ENCODE measurements at regions of chr15 and their contacts with region 1.

Region 1: DNA sequence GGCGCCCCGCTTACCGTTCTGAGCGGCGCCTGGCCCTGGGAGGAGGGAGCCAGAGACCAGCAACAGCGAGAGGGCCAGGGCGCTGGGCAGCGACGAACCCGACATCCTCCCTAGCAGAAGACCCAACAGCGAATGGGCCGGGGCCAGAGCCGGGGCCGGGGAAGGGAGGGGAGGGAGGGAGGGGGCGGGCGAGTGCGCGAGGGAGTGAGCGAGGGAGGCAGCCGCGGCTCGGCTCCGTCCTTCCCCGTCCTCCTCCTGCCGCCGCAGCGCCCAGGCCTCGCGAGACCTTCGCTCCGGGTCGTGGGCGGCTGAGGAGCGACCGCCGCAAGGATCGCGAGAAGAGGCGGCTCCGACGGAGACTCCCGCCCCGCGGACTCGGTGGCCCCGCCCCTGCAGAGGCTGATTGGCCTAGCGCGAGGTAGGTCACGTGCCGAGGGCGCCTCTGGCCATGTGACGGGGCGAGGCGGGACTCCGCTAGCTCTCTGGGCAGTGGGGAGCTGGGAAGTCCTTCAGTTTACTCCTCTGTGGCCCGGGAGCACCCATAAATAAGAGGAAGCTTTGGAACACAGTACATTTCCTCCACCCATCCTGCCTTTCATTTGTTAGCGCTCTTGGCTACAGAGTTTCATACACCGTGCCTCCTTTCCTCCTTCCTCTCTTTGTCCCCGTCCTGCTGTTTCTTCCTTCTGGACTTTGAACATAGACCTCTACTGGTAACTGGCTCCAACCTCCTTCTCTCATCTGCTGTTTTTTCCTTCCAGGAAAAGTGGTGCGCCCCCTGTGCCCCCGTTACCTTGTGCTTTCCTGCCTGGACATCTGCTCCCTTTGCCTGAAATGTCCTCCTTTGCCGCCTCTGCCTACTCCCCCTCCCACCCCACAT is at the start of gene NPTN:
- DNase-seq: peak; percentile 84
- ATAC-seq: peak; percentile 93
- H3K4me3 ChIP-seq: peak within 1 kb of the TSS; percentile 92
- H3K27ac ChIP-seq: peak within 1 kb of the TSS; percentile 66
- H3K4me1 ChIP-seq: peaks cover 18% of the 10 kb centered on the region
- H3K27me3 ChIP-seq: no peaks in the 10 kb centered on the region
- CTCF ChIP-seq: no peak
- EP300 ChIP-seq: no peak
- POLR2A ChIP-seq: peak; percentile 84
- RAD21 ChIP-seq: no peak
- polyA plus RNA-seq, gene NPTN: 17.8 to 21.9 TPM

Region 2: GRCh38 chr15:72783563-72784237 is 849.7 kb before region 1 on chr15 and contains the start of gene ADPGK:
- CTCF ChIA-PET with region 1: no interaction called
- POLR2A ChIA-PET with region 1: no interaction called
- RAD21 ChIA-PET with region 1: no interaction called
- SMC1A ChIA-PET with region 1: no interaction called
- in situ Hi-C with region 1: loop called (anchors 10 kb)
- intact Hi-C with region 1: no loop called
- DNase-seq: peak; percentile 70
- ATAC-seq: peak; percentile 86
- H3K4me3 ChIP-seq: peak within 1 kb of the TSS; percentile 94
- H3K27ac ChIP-seq: peak within 1 kb of the TSS; percentile 93
- H3K4me1 ChIP-seq: peaks cover 31% of the 10 kb centered on the region
- H3K27me3 ChIP-seq: no peaks in the 10 kb centered on the region
- CTCF ChIP-seq: 0 out of 6 replicates have a peak, but pooled peaks of 1 of the 3 experiments have one; percentile 0
- EP300 ChIP-seq: peak in 1 of 2 experiments; percentile 34; a peak in 1 of 4 replicates
- POLR2A ChIP-seq: peak; percentile 98
- RAD21 ChIP-seq: no peak
- polyA plus RNA-seq, gene ADPGK: 13.8 to 18.1 TPM

Region 3: GRCh38 chr15:73474785-73475184 is 158.6 kb before region 1 on chr15:
- CTCF ChIA-PET with region 1: no interaction called
- POLR2A ChIA-PET with region 1: no interaction called
- RAD21 ChIA-PET with region 1: no interaction called
- SMC1A ChIA-PET with region 1: no interaction called
- in situ Hi-C with region 1: no loop called
- intact Hi-C with region 1: no loop called
- DNase-seq: no peak
- ATAC-seq: no peak
- H3K4me3 ChIP-seq: no peak overlapping the region
- H3K27ac ChIP-seq: no peak overlapping the region
- H3K4me1 ChIP-seq: no peaks in the 10 kb centered on the region
- H3K27me3 ChIP-seq: no peaks in the 10 kb centered on the region; a peak in 1 of 4 replicates
- CTCF ChIP-seq: no peak
- EP300 ChIP-seq: no peak
- POLR2A ChIP-seq: no peak
- RAD21 ChIP-seq: no peak

Region 4: DNA sequence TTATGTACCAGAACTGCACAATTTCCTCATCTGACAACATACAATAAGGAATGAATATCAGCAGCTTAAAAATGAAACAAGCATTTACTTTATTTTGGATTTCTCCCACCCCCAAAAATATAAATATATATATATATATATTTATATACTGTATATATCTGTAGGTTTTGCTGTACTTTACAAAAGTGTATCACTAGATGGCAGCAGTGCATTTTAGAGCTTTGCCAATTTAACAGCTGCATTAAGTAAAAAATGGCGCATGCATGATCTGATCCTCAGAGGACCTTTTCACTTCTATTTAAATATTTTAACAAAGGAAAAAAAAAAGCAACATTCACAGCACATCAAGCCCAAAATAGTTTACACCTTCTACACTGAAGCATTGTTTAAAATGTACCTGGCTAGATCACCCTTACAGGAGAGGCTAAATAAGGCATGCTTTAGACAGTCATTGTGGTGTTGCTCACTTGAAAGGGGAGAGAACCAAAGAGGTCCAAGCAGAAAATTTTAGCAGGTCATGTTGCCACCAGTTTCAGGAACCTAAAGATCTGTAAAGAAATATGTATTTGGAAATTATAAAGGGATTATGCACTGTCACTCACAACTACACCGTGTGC is 72.7 kb before region 1 on chr15:
- CTCF ChIA-PET with region 1: interaction called, 250 read pairs
- POLR2A ChIA-PET with region 1: interaction called, 8 read pairs
- RAD21 ChIA-PET with region 1: interaction called, 86 read pairs
- SMC1A ChIA-PET with region 1: interaction called, 39 read pairs
- in situ Hi-C with region 1: loop called (anchors 5 kb)
- intact Hi-C with region 1: loop called (anchors 1 kb)
- DNase-seq: peak; percentile 9
- ATAC-seq: peak; percentile 77
- H3K4me3 ChIP-seq: no peak overlapping the region
- H3K27ac ChIP-seq: no peak overlapping the region
- H3K4me1 ChIP-seq: no peaks in the 10 kb centered on the region
- H3K27me3 ChIP-seq: no peaks in the 10 kb centered on the region
- CTCF ChIP-seq: peak; percentile 31 to 57 (median 39); a peak in 5 of 6 replicates
- EP300 ChIP-seq: no peak
- POLR2A ChIP-seq: no peak
- RAD21 ChIP-seq: peak; percentile 80

Region 5: GRCh38 chr15:73601451-73602445 is 31.6 kb before region 1 on chr15:
- CTCF ChIA-PET with region 1: interaction called, 170 read pairs
- POLR2A ChIA-PET with region 1: interaction called, 14 read pairs
- RAD21 ChIA-PET with region 1: interaction called, 21 read pairs
- SMC1A ChIA-PET with region 1: interaction called, 89 read pairs
- in situ Hi-C with region 1: no loop called
- intact Hi-C with region 1: no loop called
- DNase-seq: no peak
- ATAC-seq: peak; percentile 33; the same call in 2 of the 3 replicates
- H3K4me3 ChIP-seq: no peak overlapping the region
- H3K27ac ChIP-seq: no peak overlapping the region
- H3K4me1 ChIP-seq: peaks cover 19% of the 10 kb centered on the region
- H3K27me3 ChIP-seq: no peaks in the 10 kb centered on the region
- CTCF ChIP-seq: no peak
- EP300 ChIP-seq: no peak
- POLR2A ChIP-seq: no peak
- RAD21 ChIP-seq: no peak

Region 6: GRCh38 chr15:73650416-73651126 is 17.2 kb after region 1 on chr15:
- CTCF ChIA-PET with region 1: interaction called, 36 read pairs
- POLR2A ChIA-PET with region 1: no interaction called
- RAD21 ChIA-PET with region 1: no interaction called
- SMC1A ChIA-PET with region 1: interaction called, 4 read pairs
- in situ Hi-C with region 1: no loop called
- intact Hi-C with region 1: no loop called
- DNase-seq: no peak
- ATAC-seq: peak; percentile 31; the same call in 2 of the 3 replicates
- H3K4me3 ChIP-seq: no peak overlapping the region
- H3K27ac ChIP-seq: no peak overlapping the region
- H3K4me1 ChIP-seq: no peaks in the 10 kb centered on the region; the same call in 1 of the 2 replicates
- H3K27me3 ChIP-seq: no peaks in the 10 kb centered on the region
- CTCF ChIP-seq: no peak
- EP300 ChIP-seq: no peak
- POLR2A ChIP-seq: no peak
- RAD21 ChIP-seq: no peak

Region 7: GRCh38 chr15:73704869-73705645 is 71.7 kb after region 1 on chr15:
- CTCF ChIA-PET with region 1: interaction called, 216 read pairs
- POLR2A ChIA-PET with region 1: no interaction called
- RAD21 ChIA-PET with region 1: interaction called, 27 read pairs
- SMC1A ChIA-PET with region 1: interaction called, 48 read pairs
- in situ Hi-C with region 1: no loop called
- intact Hi-C with region 1: loop called (anchors 1 kb)
- DNase-seq: no peak
- ATAC-seq: peak; percentile 91
- H3K4me3 ChIP-seq: no peak overlapping the region
- H3K27ac ChIP-seq: no peak overlapping the region
- H3K4me1 ChIP-seq: no peaks in the 10 kb centered on the region
- H3K27me3 ChIP-seq: no peaks in the 10 kb centered on the region; a peak in 1 of 4 replicates
- CTCF ChIP-seq: peak; percentile 82 to 88 (median 86)
- EP300 ChIP-seq: no peak
- POLR2A ChIP-seq: no peak
- RAD21 ChIP-seq: peak; percentile 57